Endothelial cell of umbilical vein (primary cell): ENCODE measurements at regions of chr21 and their contacts with region 1.

Region 1: DNA sequence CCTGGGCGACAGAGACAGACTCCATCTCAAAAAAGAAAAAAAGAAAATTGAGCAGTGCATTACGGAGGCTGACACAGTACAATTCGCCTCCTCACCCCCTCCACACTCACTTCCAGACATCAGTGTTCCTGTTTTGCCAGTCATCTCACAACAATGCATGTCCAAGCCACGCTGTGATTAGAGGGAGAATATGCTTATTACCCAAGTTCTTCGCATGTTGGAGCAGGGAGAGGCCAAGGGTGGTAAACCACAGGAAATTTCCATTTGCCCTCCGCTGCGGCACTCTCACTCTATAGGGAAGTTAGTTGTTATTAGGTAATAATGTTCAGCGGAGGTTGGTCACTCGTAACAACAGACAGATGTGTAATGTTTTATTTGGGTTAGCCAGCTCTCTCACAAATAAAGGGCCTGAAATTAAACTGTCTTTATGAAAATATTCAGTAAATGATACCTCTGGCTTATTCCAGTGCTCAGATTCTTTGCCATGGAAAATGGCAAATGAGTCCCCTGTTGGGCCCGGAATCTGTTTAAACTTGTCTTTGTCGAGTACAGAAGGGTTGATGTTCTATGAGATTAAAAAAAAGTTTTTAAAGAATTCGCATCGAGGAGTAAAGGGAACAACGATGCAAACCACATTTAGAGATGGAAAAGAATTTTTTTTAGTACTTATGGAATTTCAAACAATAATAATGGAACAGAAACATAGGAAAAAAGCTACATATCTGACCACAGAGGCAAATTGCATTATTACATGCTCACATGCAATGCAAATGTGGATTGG is 33.1 kb downstream of the KCNJ15 start:
- DNase-seq: peak; percentile 73
- H3K4me3 ChIP-seq: no peak overlapping the region
- H3K27ac ChIP-seq: peak overlapping the region; percentile 41
- H3K4me1 ChIP-seq: peaks cover 6% of the 10 kb centered on the region
- H3K27me3 ChIP-seq: peaks cover 0 to 3% of the 10 kb centered on the region in 2 experiments
- CTCF ChIP-seq: no peak
- POLR2A ChIP-seq: no peak

Region 2: DNA sequence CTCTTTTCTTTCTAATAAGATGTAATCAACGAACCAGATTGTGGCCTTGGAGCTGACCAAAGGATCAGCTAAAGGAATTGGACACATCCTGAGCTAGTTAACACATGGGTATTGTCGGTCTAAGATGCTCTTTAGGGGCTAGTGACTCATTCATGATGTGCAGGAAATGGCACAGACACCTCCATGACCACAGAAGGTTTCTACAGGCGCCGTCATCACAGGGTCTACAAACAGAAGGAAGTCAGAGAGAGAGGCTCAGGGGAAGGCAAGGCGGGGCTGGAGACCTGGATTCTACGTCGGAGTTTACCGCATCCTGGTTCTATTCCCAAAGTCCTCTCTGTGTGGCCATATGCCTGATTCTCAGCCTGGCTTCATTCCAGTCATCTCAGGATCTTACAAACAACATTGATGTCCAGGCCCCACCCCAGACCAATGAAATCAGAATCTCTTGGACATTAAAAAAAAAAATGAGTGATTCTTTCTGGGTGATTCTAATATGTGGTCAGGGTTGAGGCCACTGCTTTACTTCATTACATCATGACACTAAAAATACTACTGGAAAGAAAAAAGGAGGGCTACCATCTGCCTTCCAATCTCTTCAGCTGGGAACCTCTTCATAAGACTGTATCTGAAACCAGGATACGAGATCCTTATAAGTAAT is 44.9 kb before region 1 on chr21:
- CTCF ChIA-PET with region 1: no interaction called
- POLR2A ChIA-PET with region 1: no interaction called
- dilution Hi-C with region 1: no loop called
- intact Hi-C with region 1: loop called (anchors 1 kb)
- DNase-seq: peak; percentile 33
- H3K4me3 ChIP-seq: no peak overlapping the region
- H3K27ac ChIP-seq: peak overlapping the region; percentile 7
- H3K4me1 ChIP-seq: peaks cover 22% of the 10 kb centered on the region
- H3K27me3 ChIP-seq: peaks cover 2 to 12% of the 10 kb centered on the region in 2 experiments
- CTCF ChIP-seq: no peak
- POLR2A ChIP-seq: no peak